ENCODE measurements at regions of chrX and their contacts with region 1.

Region 1: DNA sequence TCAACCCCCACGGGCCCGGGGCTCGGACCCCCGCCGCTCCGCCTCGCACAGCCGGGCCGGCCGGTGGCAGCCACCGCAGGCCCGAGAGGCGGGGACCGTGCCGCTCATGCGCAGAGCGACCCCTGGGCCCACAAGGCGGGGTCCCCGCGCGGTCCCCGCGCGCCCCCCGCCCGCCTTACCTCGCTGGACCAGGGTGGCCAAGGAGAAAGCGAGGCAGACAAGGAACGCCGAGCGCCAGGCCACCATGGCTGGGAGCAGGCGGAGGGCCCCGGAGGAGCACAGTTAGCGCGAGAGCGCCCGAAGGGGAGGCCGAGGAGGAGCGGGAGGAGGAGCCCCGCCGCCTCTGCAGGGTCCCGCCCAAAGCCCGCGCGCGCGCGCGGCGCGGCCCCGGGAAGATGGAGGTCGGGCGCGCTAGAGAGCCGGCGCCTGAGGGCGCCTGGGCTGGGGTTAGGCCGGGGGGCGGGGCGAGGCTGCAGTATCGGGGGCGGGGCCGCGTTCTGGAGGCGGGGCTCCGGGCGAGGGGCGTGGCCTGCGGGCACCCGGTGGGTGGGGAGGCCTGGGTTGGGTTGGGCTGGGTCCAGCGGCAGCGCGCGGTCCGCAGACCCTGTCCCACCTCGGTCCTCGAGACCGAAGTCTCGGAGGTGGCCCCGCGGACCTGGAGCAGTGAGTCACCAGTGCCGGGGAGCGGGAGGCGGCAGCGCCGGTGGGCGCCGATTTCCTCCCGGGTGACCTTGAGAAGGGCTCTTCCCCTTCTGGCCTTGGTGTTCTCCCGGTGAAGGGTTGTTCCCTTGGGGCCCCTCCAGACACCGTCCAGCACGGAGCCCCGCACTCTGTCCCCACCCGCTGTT is at the start of gene CD99L2:
- DNase-seq: peak; percentile 84
- H3K4me3 Mint-ChIP-seq: peak within 1 kb of the TSS; percentile 67
- H3K27ac Mint-ChIP-seq: no peak within 1 kb of the TSS
- H3K4me1 Mint-ChIP-seq: no peaks in the 10 kb centered on the region
- H3K27me3 Mint-ChIP-seq: no peaks in the 10 kb centered on the region
- CTCF ChIP-seq: no peak
- total RNA-seq, gene CD99L2: 37.6 and 42.4 TPM in 2 replicates

Region 2: DNA sequence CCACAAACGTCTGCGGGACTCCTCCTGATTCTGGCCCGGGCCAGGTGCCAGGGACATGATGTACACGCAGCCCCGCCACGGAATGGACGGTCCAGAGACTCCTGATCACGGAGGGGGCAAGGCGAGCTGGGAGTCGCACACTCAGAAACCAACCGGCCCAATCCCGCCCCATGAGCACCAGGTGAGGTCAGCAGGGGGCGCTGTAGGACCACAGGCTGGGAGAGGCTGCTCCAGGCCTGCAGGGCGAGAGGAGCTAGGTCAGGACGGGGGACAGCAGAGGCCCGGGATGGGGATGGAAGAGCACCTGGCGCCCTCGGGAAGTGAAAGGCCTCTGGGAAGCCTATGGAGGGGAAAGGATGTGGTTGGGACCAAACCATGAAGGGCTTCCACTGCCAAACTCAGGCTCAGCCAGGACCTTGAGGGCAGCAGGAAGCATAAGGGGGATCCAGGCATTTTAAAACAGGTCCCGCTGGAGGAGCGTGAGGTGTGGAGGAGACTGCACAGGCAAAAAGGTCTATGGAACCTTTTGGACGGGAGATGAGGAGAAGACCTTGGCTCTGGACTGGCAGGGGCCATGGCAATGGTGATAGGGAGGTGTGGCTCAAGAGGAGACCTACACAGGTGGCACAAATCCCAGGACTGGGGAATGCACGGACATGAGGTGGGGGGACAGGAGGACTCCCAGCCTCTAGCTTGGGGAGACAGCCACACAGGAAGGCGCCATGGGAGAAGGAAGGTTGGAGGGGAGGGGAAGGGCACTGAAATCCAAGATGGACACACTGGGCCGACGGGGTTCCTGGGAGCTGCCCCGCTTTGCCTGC is 126.2 kb before region 1 on chrX:
- CTCF ChIA-PET with region 1: no interaction called
- POLR2A ChIA-PET with region 1: no interaction called
- intact Hi-C with region 1: loop called (anchors 1 kb)
- DNase-seq: peak; percentile 81
- H3K4me3 Mint-ChIP-seq: no peak overlapping the region
- H3K27ac Mint-ChIP-seq: peak overlapping the region; percentile 20
- H3K4me1 Mint-ChIP-seq: peaks cover 7% of the 10 kb centered on the region
- H3K27me3 Mint-ChIP-seq: no peaks in the 10 kb centered on the region
- CTCF ChIP-seq: peak; percentile 87

Region 3: DNA sequence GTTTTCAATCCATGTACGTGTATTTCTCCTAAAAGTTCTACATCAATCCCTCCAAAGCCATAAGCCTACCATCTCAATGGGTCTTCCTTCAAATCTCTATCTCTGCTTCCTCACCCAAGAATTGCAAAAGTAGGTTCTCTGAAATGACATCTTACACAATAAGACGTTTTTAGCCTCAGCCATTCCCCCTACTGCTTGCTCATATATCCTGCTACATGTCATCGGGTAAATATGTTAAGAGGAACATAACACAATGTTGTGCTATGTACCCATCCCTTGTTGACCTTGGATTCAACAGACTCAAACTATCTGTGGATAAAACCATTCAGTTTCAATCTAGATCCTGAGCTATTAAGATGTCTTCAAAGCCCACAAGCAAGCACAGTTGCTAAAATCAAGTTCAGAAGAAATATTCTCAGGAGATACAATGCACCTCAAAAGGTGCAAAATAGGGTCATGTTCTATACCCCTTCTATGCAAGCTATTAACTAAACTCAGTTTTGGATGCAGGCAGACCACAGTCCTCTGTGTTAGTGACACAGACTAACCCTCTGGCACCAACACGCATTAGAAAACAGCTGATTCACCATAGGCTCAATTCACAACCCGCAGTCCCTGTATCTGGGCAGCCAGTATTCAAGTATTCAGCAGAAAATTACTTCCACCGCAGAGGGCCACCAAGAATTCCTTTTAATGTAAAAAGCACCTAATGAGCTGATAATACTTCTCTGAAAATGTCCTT is 56.9 kb before region 1 on chrX:
- CTCF ChIA-PET with region 1: no interaction called
- POLR2A ChIA-PET with region 1: interaction called, 8 read pairs
- intact Hi-C with region 1: loop called (anchors 5 kb)
- DNase-seq: peak; percentile 79
- H3K4me3 Mint-ChIP-seq: peak overlapping the region; percentile 13
- H3K27ac Mint-ChIP-seq: peak overlapping the region; percentile 67
- H3K4me1 Mint-ChIP-seq: peaks cover 36% of the 10 kb centered on the region
- H3K27me3 Mint-ChIP-seq: no peaks in the 10 kb centered on the region
- CTCF ChIP-seq: no peak

Region 4: DNA sequence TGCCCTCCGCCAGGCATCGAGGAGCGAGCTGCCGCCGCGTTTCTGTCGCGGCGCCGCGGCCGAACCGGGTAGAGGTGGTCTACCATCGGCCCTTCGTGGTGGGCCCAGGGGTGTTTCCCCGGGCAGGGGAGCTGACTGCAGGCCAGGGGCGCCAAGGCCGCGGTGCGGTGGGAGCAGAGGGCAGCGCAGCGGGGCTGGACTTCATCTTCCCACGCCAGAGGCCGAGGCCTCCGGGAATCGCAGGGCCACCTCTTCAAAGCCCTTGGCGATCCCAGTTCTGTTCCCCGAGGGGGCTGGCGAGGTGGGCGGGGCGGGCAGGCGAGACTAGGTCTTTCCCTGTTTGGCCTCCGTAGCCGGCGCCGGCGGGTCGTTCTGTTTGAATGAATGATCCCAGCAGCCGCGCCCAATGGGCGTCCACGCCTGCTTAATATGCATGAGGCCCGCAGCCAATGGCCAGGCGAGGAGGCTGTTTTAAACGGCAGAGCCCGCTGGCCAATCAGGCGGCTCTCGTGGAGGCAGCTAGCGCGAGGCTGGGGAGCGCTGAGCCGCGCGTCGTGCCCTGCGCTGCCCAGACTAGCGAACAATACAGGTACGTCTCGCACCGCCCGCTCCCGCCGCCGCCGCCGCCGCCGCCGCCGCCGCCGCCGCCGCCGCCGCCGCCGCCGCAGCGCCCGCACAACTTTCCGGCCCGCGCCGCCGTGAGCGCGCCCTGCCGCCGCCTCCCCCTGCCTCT is 84.4 kb after region 1 on chrX and contains the start of gene HMGB3:
- CTCF ChIA-PET with region 1: no interaction called
- POLR2A ChIA-PET with region 1: no interaction called
- intact Hi-C with region 1: loop called (anchors 1 kb)
- DNase-seq: peak; percentile 93
- H3K4me3 Mint-ChIP-seq: peak within 1 kb of the TSS; percentile 54
- H3K27ac Mint-ChIP-seq: no peak within 1 kb of the TSS
- H3K4me1 Mint-ChIP-seq: peaks cover 12% of the 10 kb centered on the region
- H3K27me3 Mint-ChIP-seq: no peaks in the 10 kb centered on the region
- CTCF ChIP-seq: no peak
- total RNA-seq, gene HMGB3: 65.8 and 75.3 TPM in 2 replicates

Region 5: DNA sequence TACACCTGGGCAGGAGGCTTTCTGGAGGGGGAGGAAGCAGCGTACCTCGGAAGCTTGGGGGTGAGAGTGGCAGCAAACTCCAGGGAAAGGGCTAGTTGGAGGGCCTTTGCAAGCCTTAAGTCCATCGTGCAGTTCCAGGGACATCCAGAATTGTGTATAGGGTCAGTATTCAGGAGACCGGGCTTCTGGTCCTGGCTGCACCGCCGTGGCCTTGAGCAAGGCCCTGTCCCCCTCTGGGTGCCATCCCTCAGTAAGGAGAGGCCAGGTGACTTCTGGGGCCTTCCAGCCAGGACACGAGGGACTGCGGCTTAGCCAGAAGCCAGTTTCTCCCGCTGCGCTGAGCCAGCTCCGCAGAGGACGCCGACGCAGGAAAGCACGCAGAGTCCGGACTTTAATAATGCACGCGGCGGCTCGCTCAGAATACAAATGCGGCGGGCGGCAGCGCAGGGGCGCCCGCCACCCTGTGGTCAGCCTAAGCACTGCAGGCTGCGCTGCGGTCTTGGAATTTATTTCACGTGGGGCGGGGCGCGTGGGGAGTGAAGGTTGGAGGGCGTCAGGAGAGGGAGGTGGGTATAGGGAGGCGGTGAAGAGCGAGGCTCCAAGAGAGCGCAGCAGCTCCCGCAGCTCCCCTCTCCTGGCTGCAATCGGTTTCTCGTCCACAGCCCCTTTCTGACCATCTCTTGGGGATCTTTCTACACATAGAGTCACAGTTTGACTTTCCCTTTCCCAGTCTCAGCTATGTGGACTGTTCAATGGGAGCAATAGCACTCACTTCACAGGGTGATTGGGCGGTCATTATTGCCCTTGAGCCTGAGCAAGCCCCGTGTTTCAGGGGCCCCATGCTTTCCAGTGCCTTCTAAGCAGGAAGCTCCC is 183.7 kb after region 1 on chrX:
- CTCF ChIA-PET with region 1: interaction called, 6 read pairs
- POLR2A ChIA-PET with region 1: no interaction called
- intact Hi-C with region 1: loop called (anchors 1 kb)
- DNase-seq: peak; percentile 56
- H3K4me3 Mint-ChIP-seq: peak overlapping the region; percentile 43
- H3K27ac Mint-ChIP-seq: no peak overlapping the region
- H3K4me1 Mint-ChIP-seq: no peaks in the 10 kb centered on the region
- H3K27me3 Mint-ChIP-seq: no peaks in the 10 kb centered on the region
- CTCF ChIP-seq: peak; percentile 86